Naive thymus-derived CD4-positive, alpha-beta T cell (primary cell): ENCODE measurements at regions of chr20 and their contacts with region 1.

Region 1: DNA sequence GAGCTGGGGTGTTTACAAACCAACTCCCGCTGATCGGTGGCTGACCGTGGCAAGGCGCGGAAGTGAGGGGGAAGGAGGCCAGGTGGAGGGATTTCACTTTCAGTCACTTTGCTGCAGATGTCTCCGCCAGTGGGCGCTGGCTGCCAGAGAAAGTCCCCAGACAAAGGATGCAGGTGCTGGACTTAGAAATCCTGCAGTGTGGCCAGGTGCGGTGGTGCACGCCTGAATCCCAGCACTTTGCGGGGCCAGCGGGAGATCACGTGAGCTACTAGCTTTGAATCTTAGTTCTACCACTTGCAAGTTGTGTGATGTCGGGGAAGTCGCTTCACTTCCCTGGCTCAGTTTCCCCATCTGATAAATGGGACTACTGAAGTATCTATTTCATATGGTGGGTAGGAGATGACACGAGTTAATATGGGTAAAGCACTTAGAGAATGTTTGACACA is 180.4 kb downstream of the ZNF217 start:
- DNase-seq: peak in 7 of 9 donors; percentile 11 to 43 (median 31)
- ATAC-seq: peak; percentile 52
- H3K4me3 ChIP-seq: no peak overlapping the region
- H3K4me3 Mint-ChIP-seq: peak overlapping the region in 6 of 10 donors; percentile 11 to 69 (median 42)
- H3K27ac ChIP-seq: no peak overlapping the region
- H3K27ac Mint-ChIP-seq: peak overlapping the region in 4 of 9 donors; percentile 32 to 78 (median 43)
- H3K4me1 ChIP-seq: no peaks in the 10 kb centered on the region
- H3K4me1 Mint-ChIP-seq: peaks cover 4 to 17% (median 8%) of the 10 kb centered on the region in 7 donors
- H3K27me3 ChIP-seq: no peaks in the 10 kb centered on the region
- H3K27me3 Mint-ChIP-seq: peaks cover 0 to 4% (median 0%) of the 10 kb centered on the region in 5 donors

Region 2: GRCh38 chr20:53238121-53238660 is 175.0 kb before region 1 on chr20:
- CTCF ChIA-PET with region 1: no interaction called
- POLR2A ChIA-PET with region 1: no interaction called
- intact Hi-C with region 1: no loop called
- DNase-seq: no peak
- ATAC-seq: no peak
- H3K4me3 ChIP-seq: no peak overlapping the region
- H3K4me3 Mint-ChIP-seq: no peak overlapping the region
- H3K27ac ChIP-seq: no peak overlapping the region
- H3K27ac Mint-ChIP-seq: no peak overlapping the region
- H3K4me1 ChIP-seq: no peaks in the 10 kb centered on the region
- H3K4me1 Mint-ChIP-seq: peaks cover 0 to 21% (median 5%) of the 10 kb centered on the region in 7 donors
- H3K27me3 ChIP-seq: no peaks in the 10 kb centered on the region
- H3K27me3 Mint-ChIP-seq: no peaks in the 10 kb centered on the region

Region 3: GRCh38 chr20:53939572-53940359 is 526.6 kb after region 1 on chr20:
- CTCF ChIA-PET with region 1: no interaction called
- POLR2A ChIA-PET with region 1: no interaction called
- intact Hi-C with region 1: loop called (anchors 1 kb)
- DNase-seq: peak; percentile 35 to 62 (median 48)
- ATAC-seq: peak; percentile 82
- H3K4me3 ChIP-seq: no peak overlapping the region
- H3K4me3 Mint-ChIP-seq: peak overlapping the region in 3 of 10 donors; percentile 24 to 44 (median 30)
- H3K27ac ChIP-seq: no peak overlapping the region
- H3K27ac Mint-ChIP-seq: peak overlapping the region in 6 of 9 donors; percentile 2 to 79 (median 22)
- H3K4me1 ChIP-seq: peaks cover 15 to 24% of the 10 kb centered on the region in 2 donors
- H3K4me1 Mint-ChIP-seq: peaks cover 26 to 62% (median 44%) of the 10 kb centered on the region in 7 donors
- H3K27me3 ChIP-seq: no peaks in the 10 kb centered on the region
- H3K27me3 Mint-ChIP-seq: no peaks in the 10 kb centered on the region

Region 4: GRCh38 chr20:54062812-54063280 is 649.6 kb after region 1 on chr20:
- CTCF ChIA-PET with region 1: no interaction called
- POLR2A ChIA-PET with region 1: no interaction called
- intact Hi-C with region 1: loop called (anchors 1 kb)
- DNase-seq: peak in 6 of 9 donors; percentile 8 to 40 (median 26)
- ATAC-seq: peak; percentile 61
- H3K4me3 ChIP-seq: no peak overlapping the region
- H3K4me3 Mint-ChIP-seq: no peak overlapping the region
- H3K27ac ChIP-seq: no peak overlapping the region
- H3K27ac Mint-ChIP-seq: no peak overlapping the region
- H3K4me1 ChIP-seq: peaks cover 0 to 9% of the 10 kb centered on the region in 2 donors
- H3K4me1 Mint-ChIP-seq: peaks cover 0 to 11% (median 7%) of the 10 kb centered on the region in 7 donors
- H3K27me3 ChIP-seq: no peaks in the 10 kb centered on the region
- H3K27me3 Mint-ChIP-seq: no peaks in the 10 kb centered on the region

Region 5: GRCh38 chr20:54199721-54200176 is 786.5 kb after region 1 on chr20:
- CTCF ChIA-PET with region 1: no interaction called
- POLR2A ChIA-PET with region 1: no interaction called
- intact Hi-C with region 1: loop called in 1 of 2 experiments (anchors 5 kb)
- DNase-seq: peak; percentile 32 to 69 (median 53)
- ATAC-seq: peak; percentile 78
- H3K4me3 ChIP-seq: no peak overlapping the region
- H3K4me3 Mint-ChIP-seq: no peak overlapping the region
- H3K27ac ChIP-seq: no peak overlapping the region
- H3K27ac Mint-ChIP-seq: no peak overlapping the region
- H3K4me1 ChIP-seq: no peaks in the 10 kb centered on the region
- H3K4me1 Mint-ChIP-seq: peaks cover 0 to 4% (median 0%) of the 10 kb centered on the region in 7 donors
- H3K27me3 ChIP-seq: no peaks in the 10 kb centered on the region
- H3K27me3 Mint-ChIP-seq: peaks cover 0 to 4% (median 0%) of the 10 kb centered on the region in 5 donors